ENCODE measurements at regions of chr17 and their contacts with region 1.

Region 1: GRCh38 chr17:74203439-74204240 is at the start of gene RPL38:
- DNase-seq: peak; percentile 98
- ATAC-seq: peak; percentile 92
- H3K4me3 Mint-ChIP-seq: peak within 1 kb of the TSS; percentile 100
- H3K27ac Mint-ChIP-seq: peak within 1 kb of the TSS; percentile 100
- H3K4me1 Mint-ChIP-seq: peaks cover 34% of the 10 kb centered on the region
- H3K27me3 Mint-ChIP-seq: peaks cover 13% of the 10 kb centered on the region
- CTCF ChIP-seq: peak; percentile 86
- total RNA-seq, gene RPL38: 1,500 to 1,574 TPM

Region 2: GRCh38 chr17:74089869-74090464 is 113.7 kb before region 1 on chr17:
- CTCF ChIA-PET with region 1: interaction called, 13 read pairs
- POLR2A ChIA-PET with region 1: no interaction called
- intact Hi-C with region 1: no loop called
- DNase-seq: peak; percentile 83
- ATAC-seq: peak; percentile 71
- H3K4me3 Mint-ChIP-seq: no peak overlapping the region
- H3K27ac Mint-ChIP-seq: no peak overlapping the region
- H3K4me1 Mint-ChIP-seq: no peaks in the 10 kb centered on the region
- H3K27me3 Mint-ChIP-seq: peaks cover 7% of the 10 kb centered on the region
- CTCF ChIP-seq: peak; percentile 71

Region 3: DNA sequence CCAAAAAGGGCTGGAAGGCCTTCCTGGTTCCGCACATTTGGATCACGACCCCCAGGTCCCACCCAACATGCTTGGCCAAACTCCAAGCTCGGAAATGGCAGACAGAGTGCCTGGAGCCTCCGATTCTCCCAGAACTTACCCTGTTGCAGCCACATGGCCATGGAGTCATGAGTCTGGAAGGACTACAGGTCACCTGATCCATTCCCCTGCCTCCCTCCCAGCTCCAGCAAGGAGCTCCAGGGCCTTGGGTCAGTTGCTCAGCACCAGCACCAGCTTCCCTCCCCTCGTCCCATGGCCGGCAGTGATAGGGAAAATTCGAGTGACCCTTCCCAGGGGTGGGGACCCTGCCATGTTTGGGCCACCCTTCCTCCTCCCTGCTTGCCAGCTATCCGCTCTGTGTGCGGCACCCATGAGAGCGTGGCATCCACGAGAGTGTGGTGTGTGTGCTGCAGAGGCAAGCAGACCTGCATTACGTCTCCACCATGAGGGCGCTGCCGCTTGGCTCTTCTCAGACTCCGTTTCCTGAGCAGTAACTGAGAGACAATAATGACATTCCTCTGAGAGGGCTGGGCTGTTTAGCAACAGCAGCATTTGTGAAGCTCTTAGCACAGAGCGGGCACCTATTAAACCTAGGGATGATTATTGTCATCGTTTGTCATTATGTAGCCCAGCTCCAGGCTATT is 21.5 kb before region 1 on chr17:
- CTCF ChIA-PET with region 1: interaction called, 50 read pairs
- POLR2A ChIA-PET with region 1: no interaction called
- intact Hi-C with region 1: no loop called
- DNase-seq: no peak
- ATAC-seq: no peak
- H3K4me3 Mint-ChIP-seq: no peak overlapping the region
- H3K27ac Mint-ChIP-seq: no peak overlapping the region
- H3K4me1 Mint-ChIP-seq: no peaks in the 10 kb centered on the region
- H3K27me3 Mint-ChIP-seq: peaks cover 10% of the 10 kb centered on the region
- CTCF ChIP-seq: no peak

Region 4: GRCh38 chr17:74190172-74190571 is 13.5 kb before region 1 on chr17:
- CTCF ChIA-PET with region 1: interaction called, 50 read pairs
- POLR2A ChIA-PET with region 1: interaction called, 3 read pairs
- intact Hi-C with region 1: no loop called
- DNase-seq: no peak
- ATAC-seq: peak; percentile 83
- H3K4me3 Mint-ChIP-seq: no peak overlapping the region
- H3K27ac Mint-ChIP-seq: no peak overlapping the region
- H3K4me1 Mint-ChIP-seq: peaks cover 1% of the 10 kb centered on the region
- H3K27me3 Mint-ChIP-seq: peaks cover 19% of the 10 kb centered on the region
- CTCF ChIP-seq: no peak

Measured in activated CD8-positive, alpha-beta T cell treated with anti-CD3 and anti-CD28 coated beads for 36 hours (primary cell).